ENCODE measurements at regions of chr10 and their contacts with region 1.

Region 1: DNA sequence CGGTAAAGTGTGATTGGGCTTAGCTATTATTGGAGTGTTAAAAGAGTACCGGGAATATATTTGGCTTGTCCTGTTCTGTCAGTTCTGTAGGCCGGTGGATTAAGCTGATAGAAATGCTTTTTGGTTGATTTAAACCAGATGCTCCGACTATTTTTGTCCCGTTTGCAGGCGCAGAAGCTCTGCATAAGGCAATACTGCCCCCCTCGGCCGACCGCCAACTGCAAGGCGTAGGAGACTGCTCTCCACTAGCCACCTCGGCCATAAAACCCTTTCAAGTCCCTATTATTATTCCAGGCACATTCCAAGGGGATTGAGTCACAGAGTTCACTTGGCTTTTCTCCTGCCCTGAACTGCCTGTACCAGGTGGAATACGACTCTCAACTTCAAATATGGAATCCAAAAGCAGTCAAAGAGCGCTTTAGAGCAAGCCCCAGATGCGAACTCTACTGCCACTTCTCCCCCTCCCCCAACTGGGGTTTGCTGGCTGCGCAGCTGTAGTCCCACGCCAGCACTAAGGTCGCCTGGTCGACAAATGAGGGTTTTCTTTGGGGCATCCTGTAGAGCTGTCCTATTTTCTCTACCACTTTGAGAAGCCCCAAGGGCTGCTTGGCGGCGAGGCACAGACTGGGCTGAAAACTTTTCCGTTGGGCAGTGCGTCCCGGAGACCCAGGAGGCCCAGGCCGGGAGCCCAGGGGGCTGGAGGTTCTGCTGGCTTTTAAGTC is 108.3 kb downstream of the REEP3 start:
- DNase-seq: peak; percentile 97
- ATAC-seq: peak; percentile 74
- H3K4me3 ChIP-seq: peak overlapping the region; percentile 46 to 59
- H3K27ac ChIP-seq: peak overlapping the region; percentile 94
- H3K4me1 ChIP-seq: peaks cover 38 to 48% of the 10 kb centered on the region in 2 experiments
- H3K27me3 ChIP-seq: no peaks in the 10 kb centered on the region
- CTCF ChIP-seq: peak; percentile 72 to 90 (median 87)
- POLR2A ChIP-seq: no peak
- RAD21 ChIP-seq: peak; percentile 95

Region 2: DNA sequence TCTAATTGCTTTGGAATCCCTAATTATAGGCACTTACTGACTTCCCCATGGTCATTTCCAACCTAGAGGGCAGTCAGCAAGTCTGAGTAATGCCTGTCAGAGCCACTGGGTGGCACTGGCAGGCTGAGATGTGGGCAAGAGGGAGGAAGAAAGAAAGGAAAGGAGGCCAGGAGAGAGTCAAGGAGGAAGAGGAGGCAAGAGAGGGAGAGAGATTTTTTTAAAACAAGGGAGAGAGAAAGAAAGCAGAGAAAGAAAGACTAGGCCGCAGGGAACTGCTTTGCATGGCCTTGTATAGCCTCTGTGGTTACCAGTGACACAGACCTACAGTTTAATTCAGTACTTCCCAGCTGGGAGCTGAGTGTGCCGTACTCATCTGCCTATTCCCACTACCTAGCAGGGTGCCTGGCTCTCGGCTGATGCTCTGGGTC is 1035.4 kb before region 1 on chr10:
- CTCF ChIA-PET with region 1: no interaction called
- POLR2A ChIA-PET with region 1: no interaction called
- RAD21 ChIA-PET with region 1: no interaction called
- intact Hi-C with region 1: loop called (anchors 10 kb)
- DNase-seq: peak; percentile 53
- ATAC-seq: peak; percentile 97
- H3K4me3 ChIP-seq: no peak overlapping the region
- H3K27ac ChIP-seq: no peak overlapping the region
- H3K4me1 ChIP-seq: no peaks in the 10 kb centered on the region
- H3K27me3 ChIP-seq: no peaks in the 10 kb centered on the region
- CTCF ChIP-seq: peak; percentile 87 to 96 (median 89)
- POLR2A ChIP-seq: no peak
- RAD21 ChIP-seq: peak; percentile 92

Region 3: GRCh38 chr10:63217120-63217605 is 412.4 kb before region 1 on chr10:
- CTCF ChIA-PET with region 1: no interaction called
- POLR2A ChIA-PET with region 1: no interaction called
- RAD21 ChIA-PET with region 1: no interaction called
- intact Hi-C with region 1: loop called (anchors 1 kb)
- DNase-seq: peak; percentile 27
- ATAC-seq: peak; percentile 94
- H3K4me3 ChIP-seq: no peak overlapping the region
- H3K27ac ChIP-seq: no peak overlapping the region
- H3K4me1 ChIP-seq: 0 out of 4 replicates have a peak, but pooled peaks cover 0 to 4% of the 10 kb centered on the region in 2 experiments
- H3K27me3 ChIP-seq: no peaks in the 10 kb centered on the region
- CTCF ChIP-seq: peak; percentile 53 to 69 (median 67)
- POLR2A ChIP-seq: no peak
- RAD21 ChIP-seq: peak; percentile 78

Region 4: DNA sequence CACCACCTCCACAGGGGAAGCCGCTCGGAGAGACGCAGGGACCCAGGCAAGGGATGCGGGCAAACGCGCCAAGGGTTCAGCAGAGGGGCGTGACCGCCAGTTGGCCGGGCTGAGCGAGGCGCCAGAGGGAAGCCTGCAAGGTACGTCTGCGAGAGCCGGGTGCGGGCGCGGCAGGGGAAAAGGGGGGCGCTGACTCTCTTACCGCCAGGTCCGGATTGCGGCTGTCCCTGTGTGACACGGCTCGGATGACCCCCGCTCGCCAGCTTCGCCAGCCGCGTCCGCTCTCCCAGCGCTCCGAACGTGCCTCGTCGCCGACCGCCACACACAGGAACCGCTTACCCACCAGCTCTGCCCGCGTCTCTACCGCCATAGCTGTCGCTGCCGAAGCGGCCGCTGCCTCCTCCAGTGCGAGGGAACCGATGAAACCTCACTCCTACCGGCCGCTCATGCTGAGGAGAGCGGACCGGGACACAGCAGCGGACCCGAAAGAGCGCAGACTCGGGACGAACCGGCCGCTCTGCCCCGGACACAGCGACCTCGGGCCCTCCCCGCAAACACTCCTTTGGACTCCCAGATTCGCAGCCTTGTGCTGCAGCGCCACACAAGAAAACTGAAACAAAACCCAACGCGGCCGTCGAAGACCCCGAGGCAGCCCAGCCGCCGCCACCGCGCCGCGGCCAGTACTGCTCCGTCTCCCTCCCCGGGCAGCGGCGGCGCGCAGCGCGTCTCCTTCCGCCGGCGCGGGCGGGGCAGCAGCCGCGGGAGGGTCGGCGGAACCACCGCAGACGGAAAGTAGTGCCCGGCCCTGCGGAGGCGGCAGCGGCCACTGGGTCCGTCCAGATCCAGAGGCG is 164.0 kb before region 1 on chr10 and contains the start of gene JMJD1C:
- CTCF ChIA-PET with region 1: no interaction called
- POLR2A ChIA-PET with region 1: interaction called, 5 read pairs
- RAD21 ChIA-PET with region 1: no interaction called
- intact Hi-C with region 1: loop called (anchors 5 kb)
- DNase-seq: peak; percentile 72
- ATAC-seq: peak; percentile 82
- H3K4me3 ChIP-seq: peak within 1 kb of the TSS; percentile 78 to 88
- H3K27ac ChIP-seq: peak within 1 kb of the TSS; percentile 79
- H3K4me1 ChIP-seq: peaks cover 10 to 24% of the 10 kb centered on the region in 2 experiments; a peak in 3 of 4 replicates
- H3K27me3 ChIP-seq: no peaks in the 10 kb centered on the region
- CTCF ChIP-seq: no peak
- POLR2A ChIP-seq: peak; percentile 30
- RAD21 ChIP-seq: peak; percentile 26; the same call in 1 of the 2 replicates
- total RNA-seq, gene JMJD1C: 66.3 TPM

Region 5: DNA sequence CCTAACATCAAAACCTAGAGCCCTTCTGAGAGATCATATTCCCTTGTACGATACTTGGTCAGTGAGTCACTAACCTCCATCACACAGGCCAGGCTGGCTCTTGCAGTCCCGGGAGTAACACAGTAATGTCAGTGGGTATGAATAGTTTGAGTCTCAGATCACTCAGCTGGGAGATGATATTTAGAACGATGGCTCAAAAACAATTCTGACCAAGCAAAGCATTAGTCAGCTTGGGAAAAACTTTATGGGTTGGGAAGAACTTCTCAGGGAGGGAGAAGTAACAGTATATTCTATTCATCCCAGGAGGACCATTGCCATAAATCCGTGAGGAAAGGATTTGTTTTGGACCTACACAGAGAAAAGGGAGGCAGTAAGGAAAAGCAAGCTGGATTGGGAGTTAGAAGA is 70.7 kb after region 1 on chr10:
- CTCF ChIA-PET with region 1: no interaction called
- POLR2A ChIA-PET with region 1: interaction called, 11 read pairs
- RAD21 ChIA-PET with region 1: no interaction called
- intact Hi-C with region 1: no loop called
- DNase-seq: peak; percentile 85
- ATAC-seq: peak; percentile 90
- H3K4me3 ChIP-seq: peak overlapping the region in 1 of 2 experiments; percentile 27; a peak in 2 of 4 replicates
- H3K27ac ChIP-seq: peak overlapping the region; percentile 77
- H3K4me1 ChIP-seq: peaks cover 65 to 92% of the 10 kb centered on the region in 2 experiments
- H3K27me3 ChIP-seq: no peaks in the 10 kb centered on the region
- CTCF ChIP-seq: no peak
- POLR2A ChIP-seq: no peak
- RAD21 ChIP-seq: no peak; the same call in 1 of the 2 replicates

Region 6: GRCh38 chr10:63720072-63720537 is 90.6 kb after region 1 on chr10:
- CTCF ChIA-PET with region 1: interaction called, 19 read pairs
- POLR2A ChIA-PET with region 1: interaction called, 5 read pairs
- RAD21 ChIA-PET with region 1: interaction called, 6 read pairs
- intact Hi-C with region 1: no loop called
- DNase-seq: peak; percentile 62
- ATAC-seq: peak; percentile 75
- H3K4me3 ChIP-seq: no peak overlapping the region
- H3K27ac ChIP-seq: no peak overlapping the region
- H3K4me1 ChIP-seq: peaks cover 17 to 34% of the 10 kb centered on the region in 2 experiments; a peak in 3 of 4 replicates
- H3K27me3 ChIP-seq: no peaks in the 10 kb centered on the region
- CTCF ChIP-seq: peak; percentile 90 to 96 (median 93)
- POLR2A ChIP-seq: no peak
- RAD21 ChIP-seq: peak; percentile 98